CD14-positive monocyte (primary cell): ENCODE measurements at regions of chr10 and their contacts with region 1.

Region 1: GRCh38 chr10:100286051-100287033 is at the start of gene BLOC1S2:
- DNase-seq: peak; percentile 86 to 89 (median 87)
- H3K4me3 ChIP-seq: peak within 1 kb of the TSS; percentile 90 to 93 (median 92)
- H3K4me3 Mint-ChIP-seq: peak within 1 kb of the TSS; percentile 97 to 99
- H3K27ac ChIP-seq: peak within 1 kb of the TSS; percentile 96 to 98
- H3K27ac Mint-ChIP-seq: peak within 1 kb of the TSS; percentile 98 to 100 (median 99)
- H3K4me1 ChIP-seq: peaks cover 50 to 53% of the 10 kb centered on the region in 2 donors
- H3K4me1 Mint-ChIP-seq: peaks cover 41% of the 10 kb centered on the region
- H3K27me3 ChIP-seq: no peaks in the 10 kb centered on the region
- H3K27me3 Mint-ChIP-seq: peaks cover 0 to 2% (median 0%) of the 10 kb centered on the region in 3 donors
- CTCF ChIP-seq: no peak
- polyA plus RNA-seq, gene BLOC1S2: 37.9 to 142 (median 111) TPM

Region 2: DNA sequence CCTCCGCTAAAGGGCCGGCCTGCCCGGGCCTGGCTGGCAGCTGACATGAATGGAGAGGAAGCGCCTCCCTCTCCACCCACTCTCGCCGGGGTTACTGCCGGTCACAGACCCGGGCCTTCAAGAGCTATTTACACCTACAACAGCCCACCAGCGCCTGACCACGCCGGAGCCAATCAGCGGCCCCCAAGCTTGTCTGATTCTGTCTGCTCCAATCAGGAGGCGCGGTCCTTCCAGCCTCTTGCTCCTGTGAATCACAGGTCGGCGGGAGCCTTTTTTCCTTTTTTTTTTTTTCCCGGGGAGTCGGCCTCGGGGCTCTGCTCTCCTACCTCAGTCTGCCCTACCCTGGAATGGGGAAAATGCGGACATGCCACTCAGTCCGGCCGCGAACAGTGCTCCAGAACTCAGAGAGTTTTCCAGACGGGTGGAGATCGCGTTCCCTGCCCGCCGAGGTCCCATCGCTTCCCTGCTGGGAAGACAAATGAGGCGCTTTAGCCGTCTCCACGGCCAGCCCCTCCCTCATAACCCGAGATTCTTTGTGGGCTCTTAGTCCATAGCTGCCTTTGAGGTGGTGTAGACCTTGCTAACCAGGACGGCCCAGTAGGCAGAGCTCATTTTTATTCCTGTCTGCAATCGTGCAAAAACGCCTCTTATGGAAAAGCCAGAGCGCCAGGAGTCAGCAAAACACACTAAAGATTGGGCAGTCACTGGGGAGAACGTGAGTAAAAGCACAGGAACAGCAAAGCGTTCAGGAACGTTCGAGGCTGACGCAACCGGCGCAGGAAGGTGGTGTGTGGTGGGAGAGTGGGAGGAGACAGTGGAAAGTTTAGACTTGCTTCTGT is 87.2 kb after region 1 on chr10:
- intact Hi-C with region 1: loop called in 1 of 2 experiments (anchors 5 kb)
- DNase-seq: peak; percentile 86 to 95 (median 92)
- H3K4me3 ChIP-seq: peak overlapping the region; percentile 48 to 84 (median 62)
- H3K4me3 Mint-ChIP-seq: no peak overlapping the region
- H3K27ac ChIP-seq: peak overlapping the region; percentile 60 to 77
- H3K27ac Mint-ChIP-seq: no peak overlapping the region
- H3K4me1 ChIP-seq: peaks cover 46% of the 10 kb centered on the region in 2 donors
- H3K4me1 Mint-ChIP-seq: peaks cover 29% of the 10 kb centered on the region
- H3K27me3 ChIP-seq: no peaks in the 10 kb centered on the region
- H3K27me3 Mint-ChIP-seq: peaks cover 0 to 3% (median 2%) of the 10 kb centered on the region in 3 donors
- CTCF ChIP-seq: no peak